ENCODE measurements at regions of chr1 and their contacts with region 1.

Region 1: GRCh38 chr1:231362325-231362724 is 24.2 kb downstream of the SPRTN start:
- DNase-seq: no peak

Region 2: DNA sequence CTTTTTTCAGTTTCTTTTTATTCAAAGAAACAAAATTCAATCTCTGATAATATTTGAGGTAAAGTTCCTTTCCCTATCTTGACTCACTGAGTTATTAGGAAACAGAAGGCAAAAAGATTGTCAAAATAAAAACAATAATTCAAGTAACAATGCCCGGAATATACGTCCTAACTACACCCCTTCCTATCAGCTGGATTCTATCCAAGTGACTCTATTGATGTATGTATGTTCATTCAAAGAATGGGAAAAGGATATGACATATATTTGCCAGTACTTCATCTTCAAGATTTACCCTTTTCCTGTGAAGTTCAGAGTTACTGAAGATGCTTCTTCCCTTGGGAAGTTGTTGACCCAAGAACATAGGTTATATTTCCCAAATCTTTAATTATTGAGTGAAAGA is 10.5 kb before region 1 on chr1:
- CTCF ChIA-PET with region 1: interaction called, 11 read pairs
- POLR2A ChIA-PET with region 1: no interaction called
- DNase-seq: no peak

Measured in HEK293T (cell line).